Heart right ventricle (tissue), 16 donors: ENCODE measurements at regions of chr10 and their contacts with region 1.

Region 1: DNA sequence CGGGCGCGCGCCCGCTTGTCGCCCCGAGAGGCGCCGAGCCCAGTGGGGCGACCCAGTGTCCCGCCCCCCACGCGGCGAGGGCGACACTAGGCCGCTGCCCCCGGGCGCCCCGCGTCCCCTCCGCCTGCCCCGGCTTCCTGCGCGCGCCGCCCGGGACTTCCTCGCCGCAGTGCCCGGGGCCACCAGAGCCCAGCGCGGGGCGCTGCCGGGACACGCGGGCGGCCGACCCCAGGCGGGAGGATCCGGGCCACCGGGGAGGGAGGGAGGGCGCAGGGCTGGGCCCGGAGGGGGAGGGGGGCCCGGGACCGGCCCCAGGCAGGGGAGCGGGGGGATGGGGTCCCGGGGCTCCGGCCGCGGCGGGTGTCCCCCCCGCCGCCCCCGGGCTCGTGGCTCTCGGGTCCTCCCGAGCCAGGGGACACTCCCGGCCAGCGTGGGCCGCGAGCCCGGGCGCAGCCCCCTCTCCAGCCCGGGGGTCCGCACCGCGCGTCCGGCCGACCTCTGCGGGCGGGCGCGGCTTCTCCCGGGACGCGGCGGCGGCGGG is 435 bp upstream of the PWWP2B start:
- DNase-seq: peak; percentile 58 to 73
- ATAC-seq: peak; percentile 7 to 57 (median 43)
- H3K4me3 ChIP-seq: peak overlapping the region; percentile 19 to 94 (median 64)
- H3K27ac ChIP-seq: peak overlapping the region; percentile 93 to 99 (median 97)
- H3K4me1 ChIP-seq: peaks cover 17 to 58% (median 49%) of the 10 kb centered on the region in 9 donors
- H3K27me3 ChIP-seq: no peaks in the 10 kb centered on the region
- CTCF ChIP-seq: peak in 6 of 9 donors; percentile 13 to 48 (median 29)

Region 2: DNA sequence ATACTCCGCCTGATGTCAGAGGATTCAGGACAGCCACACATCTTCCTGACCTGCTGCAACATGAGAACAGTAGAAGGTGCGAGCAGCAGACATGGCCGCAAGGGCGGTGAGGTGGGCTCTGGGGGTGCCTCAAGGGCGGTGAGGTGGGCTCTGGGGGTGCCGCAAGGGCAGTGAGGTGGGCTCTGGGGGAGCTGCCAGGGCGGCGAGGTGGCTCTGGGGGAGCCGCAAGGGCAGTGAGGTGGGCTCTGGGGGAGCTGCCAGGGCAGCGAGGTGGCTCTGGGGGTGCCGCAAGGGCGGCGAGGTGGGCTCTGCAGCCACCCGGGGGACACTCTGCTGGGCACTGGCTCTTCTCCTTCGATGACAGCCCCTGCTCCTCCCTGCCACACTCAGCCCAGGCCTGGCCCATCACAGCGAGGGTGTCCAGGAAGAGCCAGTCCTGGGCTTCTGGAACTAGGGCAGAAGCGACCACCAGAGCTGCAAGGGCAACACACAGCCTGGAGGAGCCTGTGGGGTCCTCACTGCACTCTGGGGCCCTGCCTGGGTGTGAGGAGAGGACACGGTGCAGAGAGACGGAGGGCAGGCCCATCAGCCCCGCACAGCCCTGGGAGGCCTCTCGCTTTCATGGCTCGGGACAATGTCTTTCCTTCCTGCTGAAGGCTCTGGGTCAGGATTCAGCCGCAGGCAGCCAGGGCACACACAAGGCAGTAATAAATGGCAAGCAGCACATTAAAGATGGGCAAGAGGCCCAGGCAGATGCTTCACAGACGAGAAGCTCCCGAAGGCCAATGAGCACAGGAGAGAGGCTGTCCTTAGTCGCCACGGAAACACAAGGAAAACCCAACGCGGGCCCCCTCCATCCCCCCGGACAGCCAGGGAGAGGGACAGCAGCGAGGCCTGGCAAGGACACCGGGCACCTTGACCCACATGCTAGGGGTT is 131.3 kb before region 1 on chr10:
- intact Hi-C with region 1: no loop called
- DNase-seq: peak in 1 of 2 donors; percentile 5
- ATAC-seq: peak in 1 of 8 donors; percentile 60
- H3K4me3 ChIP-seq: no peak overlapping the region
- H3K27ac ChIP-seq: no peak overlapping the region
- H3K4me1 ChIP-seq: peaks cover 0 to 10% (median 0%) of the 10 kb centered on the region in 9 donors
- H3K27me3 ChIP-seq: peaks cover 0 to 4% (median 0%) of the 10 kb centered on the region in 7 donors
- CTCF ChIP-seq: no peak

Region 3: GRCh38 chr10:132421392-132421877 is 24.9 kb after region 1 on chr10:
- intact Hi-C with region 1: loop called in 1 of 10 experiments (anchors 2 kb)
- DNase-seq: peak; percentile 77 to 79
- ATAC-seq: peak; percentile 87 to 94 (median 90)
- H3K4me3 ChIP-seq: peak overlapping the region in 6 of 10 donors; percentile 13 to 28 (median 18)
- H3K27ac ChIP-seq: peak overlapping the region; percentile 75 to 94 (median 88)
- H3K4me1 ChIP-seq: peaks cover 23 to 68% (median 43%) of the 10 kb centered on the region in 9 donors
- H3K27me3 ChIP-seq: no peaks in the 10 kb centered on the region
- CTCF ChIP-seq: no peak

Region 4: GRCh38 chr10:132446661-132447194 is 50.2 kb after region 1 on chr10:
- intact Hi-C with region 1: loop called in 2 of 10 experiments (anchors 2 to 5 kb)
- DNase-seq: no peak
- ATAC-seq: peak; percentile 59 to 77 (median 69)
- H3K4me3 ChIP-seq: peak overlapping the region in 1 of 10 donors; percentile 24
- H3K27ac ChIP-seq: peak overlapping the region in 3 of 10 donors; percentile 44 to 92 (median 63)
- H3K4me1 ChIP-seq: peaks cover 0 to 40% (median 16%) of the 10 kb centered on the region in 9 donors
- H3K27me3 ChIP-seq: no peaks in the 10 kb centered on the region
- CTCF ChIP-seq: peak in 8 of 9 donors; percentile 14 to 59 (median 44)

Region 5: DNA sequence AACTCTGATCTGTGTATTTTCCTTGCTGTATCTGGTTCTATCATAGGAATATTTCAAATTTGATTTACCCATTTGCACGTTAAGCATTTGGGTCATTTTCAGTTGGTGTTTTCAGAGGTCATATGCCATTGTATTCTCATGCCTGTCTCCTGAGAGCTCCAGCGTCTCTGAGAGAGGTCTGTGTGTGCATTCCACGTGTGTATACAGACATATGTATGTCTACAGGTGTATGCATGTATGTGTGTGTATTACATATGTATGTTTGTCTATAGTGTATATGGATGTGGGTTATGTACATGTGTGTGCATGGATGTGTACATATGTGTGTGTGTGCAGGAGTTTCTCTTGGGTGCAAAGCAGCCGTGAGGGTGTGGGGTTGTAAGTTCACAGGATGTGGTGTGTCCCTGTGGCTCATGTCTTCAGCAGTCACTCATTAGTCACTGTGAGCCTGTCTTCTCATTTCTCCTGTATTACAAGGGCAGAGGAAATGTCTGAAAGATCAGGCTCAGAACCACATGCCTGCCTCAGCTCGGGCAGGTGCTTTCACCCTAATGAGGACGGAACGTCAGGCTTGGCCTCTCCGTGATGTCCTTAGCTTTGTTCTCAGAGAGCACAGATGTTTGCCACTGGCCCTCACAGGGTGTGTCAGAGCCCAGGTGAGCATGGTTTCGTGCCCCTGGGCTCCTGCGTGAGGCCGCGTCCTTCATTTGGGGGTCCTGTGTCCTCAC is 287.8 kb after region 1 on chr10:
- intact Hi-C with region 1: no loop called
- DNase-seq: no peak
- ATAC-seq: no peak
- H3K4me3 ChIP-seq: no peak overlapping the region
- H3K27ac ChIP-seq: no peak overlapping the region
- H3K4me1 ChIP-seq: peaks cover 4 to 22% (median 17%) of the 10 kb centered on the region in 9 donors
- H3K27me3 ChIP-seq: no peaks in the 10 kb centered on the region
- CTCF ChIP-seq: no peak